Activated naive CD4-positive, alpha-beta T cell treated with anti-CD3 and anti-CD28 coated beads for 36 hours (primary cell): ENCODE measurements at regions of chr1 and their contacts with region 1.

Region 1: GRCh38 chr1:221824025-221824424 is 82.1 kb upstream of the DUSP10 start:
- DNase-seq: peak; percentile 51
- H3K4me3 Mint-ChIP-seq: no peak overlapping the region
- H3K27ac Mint-ChIP-seq: peak overlapping the region; percentile 27
- H3K4me1 Mint-ChIP-seq: peaks cover 47% of the 10 kb centered on the region
- H3K27me3 Mint-ChIP-seq: peaks cover 4% of the 10 kb centered on the region

Region 2: GRCh38 chr1:221809031-221810029 is 14.7 kb before region 1 on chr1:
- CTCF ChIA-PET with region 1: no interaction called
- intact Hi-C with region 1: loop called (anchors 1 kb)
- DNase-seq: no peak
- H3K4me3 Mint-ChIP-seq: no peak overlapping the region
- H3K27ac Mint-ChIP-seq: peak overlapping the region; percentile 12
- H3K4me1 Mint-ChIP-seq: peaks cover 44% of the 10 kb centered on the region
- H3K27me3 Mint-ChIP-seq: no peaks in the 10 kb centered on the region

Region 3: DNA sequence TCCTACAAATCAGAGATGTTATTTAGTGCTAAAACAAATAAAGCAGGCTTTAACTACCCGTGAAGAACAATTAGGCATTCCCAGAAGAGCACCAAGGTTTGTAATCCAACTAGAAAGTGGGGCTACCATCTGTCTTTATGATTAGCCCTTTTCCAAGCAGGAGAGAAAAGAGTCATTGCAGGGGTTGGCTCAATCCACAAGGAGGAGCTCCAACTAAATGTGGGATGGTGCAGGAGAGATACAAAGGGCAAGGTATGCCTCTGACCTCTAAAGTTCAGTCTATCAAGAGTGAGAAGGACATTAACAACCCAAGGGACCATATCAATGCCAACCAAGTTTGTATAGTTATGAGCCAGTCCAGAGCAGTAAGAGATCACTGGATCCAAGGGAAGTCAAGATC is 300.6 kb after region 1 on chr1:
- CTCF ChIA-PET with region 1: no interaction called
- intact Hi-C with region 1: no loop called
- DNase-seq: no peak
- H3K4me3 Mint-ChIP-seq: no peak overlapping the region
- H3K27ac Mint-ChIP-seq: no peak overlapping the region
- H3K4me1 Mint-ChIP-seq: no peaks in the 10 kb centered on the region
- H3K27me3 Mint-ChIP-seq: no peaks in the 10 kb centered on the region